T-cell (primary cell): ENCODE measurements at regions of chr11 and their contacts with region 1.

Region 1: GRCh38 chr11:125887373-125888324 is at the start of gene HYLS1:
- DNase-seq: peak; percentile 82 to 97 (median 90)
- ATAC-seq: peak; percentile 89 to 92 (median 90)
- H3K4me3 ChIP-seq: peak within 1 kb of the TSS; percentile 62 to 89
- H3K4me3 Mint-ChIP-seq: peak within 1 kb of the TSS; percentile 86 to 92 (median 87)
- H3K27ac ChIP-seq: peak within 1 kb of the TSS; percentile 83
- H3K27ac Mint-ChIP-seq: peak within 1 kb of the TSS; percentile 93 to 96
- H3K4me1 ChIP-seq: peaks cover 0 to 25% of the 10 kb centered on the region in 2 experiments
- H3K4me1 Mint-ChIP-seq: peaks cover 31 to 43% (median 42%) of the 10 kb centered on the region in 3 donors
- H3K27me3 ChIP-seq: no peaks in the 10 kb centered on the region
- H3K27me3 Mint-ChIP-seq: peaks cover 0 to 2% of the 10 kb centered on the region in 2 donors
- total RNA-seq, gene HYLS1: 2.8 to 7.4 (median 6.9) TPM

Region 2: DNA sequence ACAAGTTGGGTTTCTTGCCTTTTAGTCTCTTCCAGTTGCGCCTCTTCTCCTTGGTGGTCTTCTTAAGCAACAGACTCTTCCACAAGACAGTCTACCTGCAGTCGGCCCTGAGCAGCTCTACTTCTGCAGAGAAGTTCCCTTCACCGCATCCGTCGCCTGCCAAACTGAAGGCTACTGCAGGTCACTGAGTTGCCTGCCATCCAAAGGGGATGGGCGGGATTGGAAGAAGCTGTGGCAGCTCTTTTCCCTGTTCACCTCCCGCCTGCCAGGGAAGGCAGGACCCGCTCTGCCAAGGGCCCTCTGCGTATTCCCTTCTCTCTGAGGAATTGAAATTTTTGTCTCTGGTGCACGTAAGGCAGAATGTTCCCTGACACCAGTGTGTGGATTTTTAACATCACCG is 304.2 kb before region 1 on chr11:
- CTCF ChIA-PET with region 1: no interaction called
- POLR2A ChIA-PET with region 1: interaction called in 1 of 2 experiments, 12 read pairs
- DNase-seq: no peak
- ATAC-seq: no peak
- H3K4me3 ChIP-seq: no peak overlapping the region
- H3K4me3 Mint-ChIP-seq: no peak overlapping the region
- H3K27ac ChIP-seq: no peak overlapping the region
- H3K27ac Mint-ChIP-seq: no peak overlapping the region
- H3K4me1 ChIP-seq: no peaks in the 10 kb centered on the region
- H3K4me1 Mint-ChIP-seq: peaks cover 0 to 2% (median 0%) of the 10 kb centered on the region in 3 donors
- H3K27me3 ChIP-seq: no peaks in the 10 kb centered on the region
- H3K27me3 Mint-ChIP-seq: no peaks in the 10 kb centered on the region

Region 3: GRCh38 chr11:125902927-125903710 is 15.5 kb after region 1 on chr11 and contains the start of gene PUS3:
- CTCF ChIA-PET with region 1: interaction called, 4 to 20 read pairs
- POLR2A ChIA-PET with region 1: interaction called, 3 to 9 read pairs
- DNase-seq: peak; percentile 68 to 90 (median 82)
- ATAC-seq: peak; percentile 89 to 95 (median 92)
- H3K4me3 ChIP-seq: peak within 1 kb of the TSS; percentile 72 to 81
- H3K4me3 Mint-ChIP-seq: peak within 1 kb of the TSS; percentile 89 to 95 (median 89)
- H3K27ac ChIP-seq: peak within 1 kb of the TSS; percentile 54
- H3K27ac Mint-ChIP-seq: peak within 1 kb of the TSS; percentile 82 to 92
- H3K4me1 ChIP-seq: peaks cover 20 to 25% of the 10 kb centered on the region in 2 experiments
- H3K4me1 Mint-ChIP-seq: peaks cover 31 to 48% (median 48%) of the 10 kb centered on the region in 3 donors
- H3K27me3 ChIP-seq: peaks cover 5 to 18% of the 10 kb centered on the region in 2 experiments
- H3K27me3 Mint-ChIP-seq: peaks cover 10 to 27% of the 10 kb centered on the region in 2 donors
- total RNA-seq, gene PUS3: 5.2 to 14.6 (median 11.5) TPM

Region 4: GRCh38 chr11:126212089-126212660 is 324.5 kb after region 1 on chr11:
- CTCF ChIA-PET with region 1: no interaction called
- POLR2A ChIA-PET with region 1: interaction called in 1 of 2 experiments, 11 read pairs
- DNase-seq: no peak
- ATAC-seq: no peak
- H3K4me3 ChIP-seq: peak overlapping the region; percentile 94 to 96
- H3K4me3 Mint-ChIP-seq: peak overlapping the region; percentile 89 to 99 (median 99)
- H3K27ac ChIP-seq: no peak overlapping the region
- H3K27ac Mint-ChIP-seq: peak overlapping the region in 1 of 2 donors; percentile 97
- H3K4me1 ChIP-seq: peaks cover 9 to 14% of the 10 kb centered on the region in 2 experiments
- H3K4me1 Mint-ChIP-seq: peaks cover 38 to 41% (median 39%) of the 10 kb centered on the region in 3 donors
- H3K27me3 ChIP-seq: no peaks in the 10 kb centered on the region
- H3K27me3 Mint-ChIP-seq: no peaks in the 10 kb centered on the region